ENCODE measurements at regions of chr3 and their contacts with region 1.

Region 1: GRCh38 chr3:98329392-98330124 is 24.1 kb upstream of the OR5K4 start:
- DNase-seq: peak in 6 of 10 donors; percentile 38 to 86 (median 56)

Region 2: DNA sequence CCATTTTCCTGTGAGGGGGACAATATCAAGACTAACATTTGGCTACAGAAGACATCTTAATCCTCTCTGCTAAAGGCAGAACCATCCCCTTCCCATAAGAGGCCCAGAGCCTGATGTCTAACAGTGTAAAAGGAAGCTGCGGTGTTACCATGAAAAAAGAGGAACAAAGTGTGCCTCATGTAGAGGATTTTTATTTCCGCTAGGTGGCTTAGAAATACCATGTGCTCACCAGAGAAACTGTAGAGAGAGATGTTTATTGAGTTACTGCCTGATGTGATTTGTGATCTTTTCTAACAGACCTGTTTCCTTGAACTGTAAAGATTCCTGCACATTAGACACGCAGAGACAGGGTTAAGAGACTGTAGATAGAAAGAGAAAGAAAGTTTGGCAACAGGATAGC is 141.0 kb before region 1 on chr3:
- intact Hi-C with region 1: loop called (anchors 2 kb)
- DNase-seq: no peak

Region 3: GRCh38 chr3:98272116-98272515 is 57.4 kb before region 1 on chr3:
- intact Hi-C with region 1: no loop called
- DNase-seq: no peak

Region 4: GRCh38 chr3:98573181-98573728 is 243.7 kb after region 1 on chr3:
- intact Hi-C with region 1: loop called (anchors 10 kb)
- DNase-seq: no peak

Measured in posterior cingulate gyrus (tissue), 11 donors.